ENCODE measurements at regions of chr16 and their contacts with region 1.

Region 1: GRCh38 chr16:3123986-3124886 is 10.6 kb upstream of the ZNF213 start:
- DNase-seq: peak; percentile 79
- ATAC-seq: peak; percentile 95
- H3K4me3 ChIP-seq: peak overlapping the region; percentile 70 to 78
- H3K27ac ChIP-seq: peak overlapping the region; percentile 74
- H3K4me1 ChIP-seq: no peaks in the 10 kb centered on the region
- H3K27me3 ChIP-seq: no peaks in the 10 kb centered on the region
- CTCF ChIP-seq: no peak

Region 2: DNA sequence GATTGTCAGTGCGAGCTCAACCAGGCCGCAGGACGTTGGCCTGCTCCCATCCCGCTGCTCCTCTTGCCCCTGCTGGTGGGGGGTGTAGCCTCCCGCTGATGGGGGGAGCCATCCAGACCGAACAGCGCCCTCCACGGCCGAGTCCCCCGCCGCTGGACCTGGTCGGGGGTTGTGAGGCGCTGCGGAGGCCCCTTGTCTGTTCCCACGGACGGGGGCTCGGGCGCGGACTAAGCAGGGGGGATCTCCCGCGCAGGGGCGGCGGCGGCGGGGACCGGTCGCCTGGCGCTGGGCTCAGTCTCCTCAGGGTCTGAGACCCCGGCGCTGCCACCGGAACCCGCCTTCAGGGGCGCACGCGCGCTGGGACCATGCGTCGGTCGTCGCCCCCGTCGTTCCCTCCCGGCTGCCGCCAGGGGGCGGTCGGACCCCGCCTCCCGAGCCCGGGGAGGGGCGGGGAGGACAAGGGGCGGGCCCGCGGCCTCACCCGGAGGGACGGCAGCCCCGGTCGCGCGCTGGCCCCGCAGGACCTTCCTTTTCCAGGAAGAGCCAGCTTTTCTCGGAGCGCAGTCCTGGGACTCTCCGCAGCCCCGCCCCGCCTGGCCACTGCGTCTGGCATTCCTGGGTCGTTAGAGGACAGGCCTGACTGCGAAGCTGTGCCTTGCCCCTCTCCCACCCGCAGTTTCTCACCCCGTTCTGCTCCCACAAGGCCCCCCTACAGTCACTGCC is 65.1 kb before region 1 on chr16:
- CTCF ChIA-PET with region 1: interaction called, 12 read pairs
- POLR2A ChIA-PET with region 1: no interaction called
- in situ Hi-C with region 1: no loop called
- intact Hi-C with region 1: loop called (anchors 10 kb)
- DNase-seq: no peak
- ATAC-seq: peak; percentile 93
- H3K4me3 ChIP-seq: peak overlapping the region; percentile 70 to 74
- H3K27ac ChIP-seq: peak overlapping the region; percentile 83
- H3K4me1 ChIP-seq: peaks cover 2% of the 10 kb centered on the region; the same call in 1 of the 2 replicates
- H3K27me3 ChIP-seq: no peaks in the 10 kb centered on the region
- CTCF ChIP-seq: peak; percentile 97

Region 3: GRCh38 chr16:3101018-3101840 is 23.0 kb before region 1 on chr16:
- CTCF ChIA-PET with region 1: no interaction called
- POLR2A ChIA-PET with region 1: interaction called, 13 read pairs
- in situ Hi-C with region 1: no loop called
- intact Hi-C with region 1: no loop called
- DNase-seq: no peak
- ATAC-seq: no peak
- H3K4me3 ChIP-seq: no peak overlapping the region
- H3K27ac ChIP-seq: peak overlapping the region; percentile 70; the same call in 1 of the 2 replicates
- H3K4me1 ChIP-seq: peaks cover 9% of the 10 kb centered on the region
- H3K27me3 ChIP-seq: no peaks in the 10 kb centered on the region
- CTCF ChIP-seq: peak; percentile 91

Region 4: DNA sequence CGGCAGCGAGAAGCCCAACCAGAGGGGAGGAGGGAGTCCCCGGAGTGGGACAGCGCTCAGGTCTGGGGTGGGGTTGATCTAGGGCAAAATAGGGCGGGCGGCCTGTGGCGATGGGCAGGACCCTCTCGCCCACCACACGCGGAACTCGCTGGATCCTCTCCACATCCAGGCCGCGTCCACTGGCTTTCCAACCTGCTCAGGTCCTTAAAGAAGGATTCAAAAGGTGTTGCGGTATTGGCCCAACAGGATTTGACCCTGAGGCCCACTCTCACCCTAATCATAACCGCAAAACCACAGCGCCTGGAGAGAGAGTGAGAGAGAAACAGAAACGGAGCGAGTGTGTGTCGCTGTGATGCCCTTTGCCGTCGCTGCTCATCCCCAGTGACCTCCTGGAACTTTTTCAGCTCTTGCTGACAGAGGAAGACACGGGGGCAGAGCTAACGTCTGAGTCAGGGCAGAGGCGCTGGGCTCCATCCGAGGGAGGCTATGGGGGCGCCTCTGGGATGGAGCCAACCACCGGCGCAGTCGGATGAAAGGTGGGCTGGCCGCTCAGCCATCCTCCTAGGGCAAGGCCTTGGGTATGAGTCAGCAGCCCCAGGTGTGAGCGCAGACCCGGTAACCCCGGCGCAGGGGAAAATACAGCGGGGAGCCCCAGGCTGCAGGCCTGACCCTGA is 47.1 kb after region 1 on chr16:
- CTCF ChIA-PET with region 1: interaction called, 5 read pairs
- POLR2A ChIA-PET with region 1: interaction called, 13 read pairs
- in situ Hi-C with region 1: no loop called
- intact Hi-C with region 1: no loop called
- DNase-seq: no peak
- ATAC-seq: peak; percentile 15
- H3K4me3 ChIP-seq: peak overlapping the region; percentile 35 to 53
- H3K27ac ChIP-seq: peak overlapping the region; percentile 53; the same call in 1 of the 2 replicates
- H3K4me1 ChIP-seq: peaks cover 25% of the 10 kb centered on the region
- H3K27me3 ChIP-seq: no peaks in the 10 kb centered on the region
- CTCF ChIP-seq: no peak

Measured in Panc1 (cell line).